Activated T-helper 2 cell treated with anti-CD3 and anti-CD28 coated beads, Interferon-gamma antibody, Interleukin-2, Interleukin-4, amounts not matched to agents 10 μg/mL and 5 μg/mL and 100 μg/mL, durations not matched to agents 14 hours and 24 hours and 36 hours (primary cell): ENCODE measurements at regions of chr1 and their contacts with region 1.

Region 1: GRCh38 chr1:220272047-220272840 is at the start of gene RAB3GAP2:
- DNase-seq: peak; percentile 97
- H3K4me3 Mint-ChIP-seq: no peak within 1 kb of the TSS
- H3K27ac Mint-ChIP-seq: no peak within 1 kb of the TSS
- H3K4me1 Mint-ChIP-seq: peaks cover 14% of the 10 kb centered on the region
- H3K27me3 Mint-ChIP-seq: peaks cover 12% of the 10 kb centered on the region
- total RNA-seq, gene RAB3GAP2: 52.8 and 60.7 TPM in 2 replicates

Region 2: DNA sequence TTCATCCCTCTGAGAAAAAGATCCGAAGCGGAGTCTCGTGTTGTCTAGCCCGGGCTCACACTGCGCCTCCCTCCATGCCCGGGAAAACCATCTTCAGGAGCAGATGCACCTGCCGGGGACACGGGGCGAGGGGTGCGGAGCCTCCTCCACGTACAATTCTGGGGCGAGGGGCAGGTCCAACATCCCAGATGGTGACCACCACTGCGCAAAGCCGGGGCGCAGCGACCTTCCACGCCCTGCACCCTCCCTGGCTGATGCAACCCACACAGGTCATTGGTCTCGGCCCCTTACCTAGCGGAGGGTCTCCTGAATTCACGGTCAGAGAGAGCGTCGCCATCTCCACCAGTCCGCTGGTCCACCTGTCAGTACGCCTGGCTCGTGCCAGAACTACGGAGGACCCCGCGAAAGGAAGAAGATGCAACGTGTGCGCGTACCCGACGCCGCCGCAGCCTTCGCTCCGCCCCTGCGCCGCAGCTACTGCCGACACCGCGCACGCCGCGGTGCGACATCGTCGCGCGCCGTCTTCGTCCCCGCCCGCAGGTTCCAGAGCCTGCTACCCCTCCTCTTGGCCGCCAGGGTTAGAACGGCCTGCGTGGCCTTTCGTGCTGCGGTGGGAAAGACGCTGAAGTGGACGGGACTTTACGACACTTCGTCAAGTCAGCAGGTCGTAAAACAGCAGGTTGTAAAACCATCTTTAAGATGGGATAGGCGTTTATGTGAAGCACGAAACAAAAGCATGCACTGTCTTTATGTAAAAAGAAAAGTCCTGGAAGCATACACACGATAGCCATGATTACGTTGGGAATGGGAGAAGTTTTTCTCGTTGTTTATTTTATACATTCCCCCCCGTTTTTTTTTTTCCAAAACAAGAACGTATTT is 226.0 kb before region 1 on chr1 and contains the start of gene EPRS1:
- intact Hi-C with region 1: loop called (anchors 1 kb)
- DNase-seq: peak; percentile 95
- H3K4me3 Mint-ChIP-seq: peak within 1 kb of the TSS; percentile 92
- H3K27ac Mint-ChIP-seq: peak within 1 kb of the TSS; percentile 96
- H3K4me1 Mint-ChIP-seq: peaks cover 22% of the 10 kb centered on the region
- H3K27me3 Mint-ChIP-seq: no peaks in the 10 kb centered on the region
- total RNA-seq, gene EPRS1: 163 and 176 TPM in 2 replicates

Region 3: DNA sequence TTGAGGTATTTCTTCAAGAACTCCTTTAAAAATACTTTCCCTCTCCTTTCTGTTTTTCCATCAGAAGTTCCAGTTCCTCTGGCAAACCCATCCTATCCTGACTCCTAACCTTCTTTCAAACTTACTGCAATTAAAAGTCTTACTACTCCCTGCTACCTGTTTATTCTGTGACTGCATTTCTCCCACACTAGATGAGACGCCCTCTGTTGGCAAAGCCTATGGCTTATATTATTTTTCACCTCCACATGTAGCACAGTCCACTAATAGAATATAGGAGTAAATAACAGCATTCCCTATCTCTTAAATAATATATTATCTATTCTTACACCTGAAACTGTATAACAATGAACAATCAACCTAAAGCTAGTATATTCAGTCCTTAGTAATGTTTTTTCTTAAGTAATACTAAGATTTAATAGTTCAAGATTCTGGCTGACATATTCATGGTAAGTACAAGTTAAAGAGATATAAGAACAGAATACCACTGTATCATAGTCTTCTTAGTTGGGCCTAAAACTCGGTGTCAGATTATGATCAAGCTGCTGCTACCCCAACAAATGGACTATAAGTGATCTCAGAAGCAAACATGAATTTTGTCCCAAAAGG is 54.8 kb before region 1 on chr1:
- intact Hi-C with region 1: loop called (anchors 5 kb)
- DNase-seq: no peak
- H3K4me3 Mint-ChIP-seq: no peak overlapping the region
- H3K27ac Mint-ChIP-seq: no peak overlapping the region
- H3K4me1 Mint-ChIP-seq: peaks cover 8% of the 10 kb centered on the region
- H3K27me3 Mint-ChIP-seq: no peaks in the 10 kb centered on the region

Region 4: DNA sequence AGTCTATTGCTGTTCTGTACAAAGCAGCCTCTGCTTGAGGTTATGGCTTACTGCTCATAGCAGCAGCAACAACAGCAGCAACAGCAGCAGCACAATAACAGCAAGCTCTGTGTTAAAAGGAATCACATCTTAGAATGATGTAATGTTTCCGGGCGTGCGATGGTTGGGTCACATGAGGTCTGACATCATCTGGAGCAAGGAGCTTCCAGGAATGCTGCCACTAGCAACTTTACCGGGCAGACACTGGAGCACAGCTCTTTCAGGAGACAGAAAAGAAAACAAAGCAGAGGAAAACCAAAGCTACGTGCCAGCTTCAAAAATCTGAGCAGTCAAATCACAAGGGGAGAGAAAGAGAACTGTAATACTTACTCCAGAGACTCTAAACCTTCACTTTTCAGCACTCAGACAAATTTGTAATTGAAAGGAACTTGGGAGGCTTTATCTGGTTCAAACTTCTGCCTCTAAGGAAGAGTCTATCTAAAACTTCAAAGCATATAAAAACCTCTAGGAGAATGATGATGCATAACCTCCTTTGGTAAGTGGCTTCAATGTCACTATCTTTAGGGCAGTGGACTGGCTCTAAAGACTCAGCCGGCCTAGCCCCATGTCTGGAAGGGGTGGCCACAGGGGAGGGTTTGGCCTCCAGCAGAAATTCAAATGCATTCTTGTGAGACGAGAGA is 28.3 kb after region 1 on chr1:
- intact Hi-C with region 1: no loop called
- DNase-seq: no peak
- H3K4me3 Mint-ChIP-seq: no peak overlapping the region
- H3K27ac Mint-ChIP-seq: no peak overlapping the region
- H3K4me1 Mint-ChIP-seq: peaks cover 2% of the 10 kb centered on the region
- H3K27me3 Mint-ChIP-seq: peaks cover 8% of the 10 kb centered on the region